Activated T-helper 1 cell treated with anti-CD3 and anti-CD28 coated beads, Interleukin-12 subunit alpha, Interleukin-12 subunit beta, Interleukin-2, Interleukin-4 antibody, amounts not matched to agents 30 ng/mL and 10 ng/mL and 1 ng/mL, durations not matched to agents 14 hours and 24 hours and 36 hours (primary cell): ENCODE measurements at regions of chr2 and their contacts with region 1.

Region 1: GRCh38 chr2:171244970-171245782 is 84.5 kb upstream of the TLK1 start:
- DNase-seq: no peak
- H3K4me3 Mint-ChIP-seq: no peak overlapping the region
- H3K27ac Mint-ChIP-seq: no peak overlapping the region
- H3K4me1 Mint-ChIP-seq: peaks cover 47% of the 10 kb centered on the region
- H3K27me3 Mint-ChIP-seq: no peaks in the 10 kb centered on the region

Region 2: DNA sequence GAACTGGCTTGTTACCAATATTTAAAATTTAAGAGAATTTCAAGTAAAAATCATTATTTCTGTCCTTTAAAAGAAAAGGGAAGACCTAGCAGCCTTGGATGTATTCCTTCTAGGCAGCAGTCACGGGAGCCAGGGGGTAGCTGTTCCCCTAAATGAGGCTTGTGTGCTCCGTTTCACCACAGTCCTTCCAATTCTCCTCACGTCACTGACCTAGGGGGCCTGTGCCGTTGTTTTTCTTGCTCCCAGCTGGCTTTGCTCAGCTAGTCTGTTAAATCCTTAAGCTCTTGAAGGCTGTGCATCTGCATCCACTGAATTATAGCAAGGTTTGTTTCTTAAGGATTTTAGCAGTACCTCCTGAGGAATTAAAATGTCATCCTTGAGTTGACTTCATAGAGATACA is 1501.6 kb before region 1 on chr2:
- intact Hi-C with region 1: no loop called
- DNase-seq: no peak
- H3K4me3 Mint-ChIP-seq: no peak overlapping the region
- H3K27ac Mint-ChIP-seq: no peak overlapping the region
- H3K4me1 Mint-ChIP-seq: no peaks in the 10 kb centered on the region
- H3K27me3 Mint-ChIP-seq: peaks cover 4% of the 10 kb centered on the region

Region 3: DNA sequence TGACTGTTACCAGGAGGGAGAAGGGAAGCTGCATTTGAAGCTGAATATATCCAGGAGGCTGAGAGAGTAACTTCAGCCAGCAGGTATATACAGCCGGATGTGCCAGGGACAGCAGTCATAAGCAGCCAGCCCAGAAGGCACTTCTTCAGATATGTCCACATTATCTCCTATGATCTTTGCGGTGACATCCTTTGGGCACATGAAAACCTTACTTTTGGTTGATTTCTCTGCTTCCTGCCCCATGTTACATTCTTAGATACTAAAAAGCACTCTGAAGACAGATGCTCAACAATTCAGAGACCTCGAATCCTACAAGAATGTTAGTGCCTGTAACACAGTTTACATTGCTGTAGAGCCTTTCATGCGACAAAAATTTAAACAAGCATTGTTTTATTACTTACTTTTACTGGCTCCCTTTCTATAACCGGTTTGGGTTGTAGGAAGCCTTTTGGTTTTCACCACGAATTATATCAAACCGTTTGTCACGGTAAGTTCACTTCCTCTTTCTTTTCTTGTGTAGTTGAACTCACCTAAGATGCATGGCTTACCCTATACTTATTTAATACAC is 34.2 kb before region 1 on chr2:
- intact Hi-C with region 1: loop called (anchors 5 kb)
- DNase-seq: peak; percentile 31
- H3K4me3 Mint-ChIP-seq: peak overlapping the region; percentile 48
- H3K27ac Mint-ChIP-seq: peak overlapping the region; percentile 35
- H3K4me1 Mint-ChIP-seq: peaks cover 11% of the 10 kb centered on the region
- H3K27me3 Mint-ChIP-seq: peaks cover 2% of the 10 kb centered on the region

Region 4: GRCh38 chr2:171225302-171225980 is 19.7 kb before region 1 on chr2:
- intact Hi-C with region 1: no loop called
- DNase-seq: no peak
- H3K4me3 Mint-ChIP-seq: no peak overlapping the region
- H3K27ac Mint-ChIP-seq: no peak overlapping the region
- H3K4me1 Mint-ChIP-seq: no peaks in the 10 kb centered on the region
- H3K27me3 Mint-ChIP-seq: no peaks in the 10 kb centered on the region